Activated T-helper 2 cell treated with anti-CD3 and anti-CD28 coated beads, Interferon-gamma antibody, Interleukin-2, Interleukin-4, amounts not matched to agents 10 μg/mL and 5 μg/mL and 100 μg/mL, durations not matched to agents 14 hours and 24 hours and 36 hours (primary cell): ENCODE measurements at regions of chr3 and their contacts with region 1.

Region 1: DNA sequence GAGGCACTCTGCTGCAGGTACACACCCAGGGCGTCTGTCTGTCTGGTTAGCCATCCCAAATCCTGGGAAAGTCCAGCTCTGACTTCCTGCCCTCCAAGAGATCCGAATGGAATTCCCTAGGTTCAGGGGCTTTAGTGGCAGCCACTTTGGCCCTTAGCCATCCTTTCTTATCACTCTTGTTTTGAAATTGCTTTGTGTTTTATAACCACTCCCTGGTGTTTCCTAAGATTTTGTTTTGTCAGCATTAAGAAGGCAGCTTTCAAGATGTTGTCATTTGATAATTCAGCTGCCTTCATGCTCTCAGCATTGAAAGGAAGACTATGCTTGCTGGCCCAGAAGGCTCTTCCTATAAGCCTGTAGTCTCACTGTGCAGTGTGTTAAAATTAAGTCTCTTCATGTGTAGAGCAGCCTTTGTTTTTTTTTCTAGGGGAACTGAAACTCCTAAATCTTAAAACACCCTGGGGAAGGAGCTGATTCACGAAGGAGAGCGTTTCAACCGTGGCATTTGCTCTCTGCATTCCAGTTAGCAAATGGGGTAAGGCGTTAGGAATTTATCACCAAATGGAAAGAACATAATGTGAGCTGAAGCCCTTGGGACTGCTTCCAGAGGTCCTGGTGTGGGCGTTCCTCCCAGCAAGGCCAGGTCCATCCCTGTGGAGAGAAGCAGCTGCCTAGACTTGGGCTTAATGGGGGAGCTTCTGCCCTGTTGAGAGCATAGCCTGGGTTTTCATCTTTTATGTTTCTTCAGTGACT is 14.2 kb upstream of the CLEC3B start:
- DNase-seq: no peak
- H3K4me3 Mint-ChIP-seq: no peak overlapping the region
- H3K27ac Mint-ChIP-seq: no peak overlapping the region
- H3K4me1 Mint-ChIP-seq: peaks cover 6% of the 10 kb centered on the region
- H3K27me3 Mint-ChIP-seq: no peaks in the 10 kb centered on the region

Region 2: GRCh38 chr3:44987332-44987731 is 24.6 kb before region 1 on chr3:
- intact Hi-C with region 1: loop called (anchors 2 kb)
- DNase-seq: no peak
- H3K4me3 Mint-ChIP-seq: no peak overlapping the region
- H3K27ac Mint-ChIP-seq: no peak overlapping the region
- H3K4me1 Mint-ChIP-seq: peaks cover 28% of the 10 kb centered on the region
- H3K27me3 Mint-ChIP-seq: no peaks in the 10 kb centered on the region

Region 3: GRCh38 chr3:45055411-45056143 is 43.6 kb after region 1 on chr3:
- intact Hi-C with region 1: no loop called
- DNase-seq: no peak
- H3K4me3 Mint-ChIP-seq: no peak overlapping the region
- H3K27ac Mint-ChIP-seq: no peak overlapping the region
- H3K4me1 Mint-ChIP-seq: peaks cover 46% of the 10 kb centered on the region
- H3K27me3 Mint-ChIP-seq: peaks cover 1% of the 10 kb centered on the region